Activated CD8-positive, alpha-beta T cell treated with anti-CD3 and anti-CD28 coated beads for 36 hours (primary cell): ENCODE measurements at regions of chr10 and their contacts with region 1.

Region 1: GRCh38 chr10:97454330-97455036 is 8.5 kb downstream of the ZDHHC16 start:
- DNase-seq: peak; percentile 52
- ATAC-seq: peak; percentile 80
- H3K4me3 Mint-ChIP-seq: no peak overlapping the region
- H3K27ac Mint-ChIP-seq: peak overlapping the region; percentile 94
- H3K4me1 Mint-ChIP-seq: peaks cover 38% of the 10 kb centered on the region
- H3K27me3 Mint-ChIP-seq: no peaks in the 10 kb centered on the region
- CTCF ChIP-seq: no peak

Region 2: GRCh38 chr10:97089209-97089870 is 365.1 kb before region 1 on chr10:
- CTCF ChIA-PET with region 1: no interaction called
- POLR2A ChIA-PET with region 1: no interaction called
- intact Hi-C with region 1: no loop called
- DNase-seq: no peak
- ATAC-seq: no peak
- H3K4me3 Mint-ChIP-seq: no peak overlapping the region
- H3K27ac Mint-ChIP-seq: no peak overlapping the region
- H3K4me1 Mint-ChIP-seq: no peaks in the 10 kb centered on the region
- H3K27me3 Mint-ChIP-seq: peaks cover 29% of the 10 kb centered on the region
- CTCF ChIP-seq: no peak

Region 3: GRCh38 chr10:97407211-97407951 is 47.1 kb before region 1 on chr10:
- CTCF ChIA-PET with region 1: interaction called, 16 read pairs
- POLR2A ChIA-PET with region 1: interaction called, 3 read pairs
- intact Hi-C with region 1: no loop called
- DNase-seq: peak; percentile 75
- ATAC-seq: peak; percentile 96
- H3K4me3 Mint-ChIP-seq: peak overlapping the region; percentile 31
- H3K27ac Mint-ChIP-seq: peak overlapping the region; percentile 62
- H3K4me1 Mint-ChIP-seq: peaks cover 10% of the 10 kb centered on the region
- H3K27me3 Mint-ChIP-seq: no peaks in the 10 kb centered on the region
- CTCF ChIP-seq: peak; percentile 97